Mucosa of descending colon (tissue), 3 donors: ENCODE measurements at regions of chr1 and their contacts with region 1.

Region 1: DNA sequence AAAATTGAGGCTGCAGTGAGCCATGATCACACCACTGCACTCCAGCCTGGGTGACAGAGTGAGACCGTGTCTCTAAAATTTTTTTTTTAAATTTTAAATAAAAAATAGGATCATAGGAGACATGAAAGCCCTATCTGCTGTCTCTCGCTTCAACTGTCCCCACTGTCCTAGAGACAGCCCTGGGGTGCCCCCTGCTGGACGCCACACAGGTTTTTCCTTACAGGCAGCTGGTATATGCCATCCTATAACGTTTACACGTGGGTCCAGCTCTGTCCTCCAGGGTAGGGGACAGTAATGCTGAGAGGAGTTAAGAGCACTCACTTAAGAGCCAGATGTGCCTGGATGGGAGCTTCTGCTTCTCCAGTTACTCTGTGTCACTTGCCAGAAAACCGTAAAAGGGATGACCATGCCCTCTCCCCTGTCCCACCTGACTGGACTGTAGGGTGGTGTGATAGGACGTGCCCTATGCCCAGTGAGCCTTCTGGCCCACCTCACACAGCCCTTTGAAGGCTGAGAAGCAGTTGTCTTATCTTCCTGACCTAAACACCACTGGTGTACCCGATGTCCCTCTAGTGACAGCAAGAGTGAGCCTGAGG is 8.5 kb downstream of the FBXO2 start:
- DNase-seq: peak; percentile 76 to 85 (median 85)
- ATAC-seq: peak; percentile 54
- H3K4me3 ChIP-seq: no peak overlapping the region
- H3K4me1 ChIP-seq: peaks cover 14% of the 10 kb centered on the region
- CTCF ChIP-seq: peak; percentile 65

Region 2: GRCh38 chr1:11037740-11038182 is 608.0 kb before region 1 on chr1:
- intact Hi-C with region 1: loop called (anchors 5 to 10 kb)
- DNase-seq: peak; percentile 84 to 91 (median 87)
- ATAC-seq: peak; percentile 97
- H3K4me3 ChIP-seq: no peak overlapping the region
- H3K4me1 ChIP-seq: peaks cover 4% of the 10 kb centered on the region
- CTCF ChIP-seq: peak; percentile 86

Region 3: DNA sequence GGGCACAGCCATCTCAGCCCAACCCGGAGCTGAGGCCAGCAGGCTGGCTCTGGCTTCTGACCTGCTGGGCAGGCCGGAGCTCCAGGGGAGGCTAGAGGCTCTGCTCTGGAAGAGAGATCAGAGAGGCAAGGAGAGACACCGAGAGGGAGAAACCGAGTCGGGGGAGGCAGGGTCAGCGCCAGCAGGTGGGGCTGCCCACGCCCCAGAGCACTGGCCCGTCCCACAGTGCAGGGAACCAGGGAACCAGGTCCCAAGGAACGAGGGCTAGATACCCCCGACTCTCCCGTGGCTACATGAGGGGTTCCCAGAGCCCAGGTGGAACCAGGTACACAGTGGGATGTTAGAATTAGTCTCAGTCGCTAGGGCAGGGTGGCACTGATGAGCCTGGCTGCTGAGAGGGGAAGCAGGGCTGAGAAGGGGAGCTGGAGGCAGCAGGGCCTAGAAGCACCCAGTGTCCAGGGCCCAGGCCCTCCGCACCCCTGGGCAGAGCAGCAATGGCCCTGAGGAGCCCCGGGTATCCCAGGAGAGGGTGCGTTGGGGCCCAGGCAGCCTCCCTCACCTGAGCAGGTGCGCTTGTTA is 600.8 kb before region 1 on chr1:
- intact Hi-C with region 1: loop called in 1 of 2 experiments (anchors 5 kb)
- DNase-seq: no peak
- ATAC-seq: no peak
- H3K4me3 ChIP-seq: no peak overlapping the region
- H3K4me1 ChIP-seq: no peaks in the 10 kb centered on the region
- CTCF ChIP-seq: no peak

Region 4: DNA sequence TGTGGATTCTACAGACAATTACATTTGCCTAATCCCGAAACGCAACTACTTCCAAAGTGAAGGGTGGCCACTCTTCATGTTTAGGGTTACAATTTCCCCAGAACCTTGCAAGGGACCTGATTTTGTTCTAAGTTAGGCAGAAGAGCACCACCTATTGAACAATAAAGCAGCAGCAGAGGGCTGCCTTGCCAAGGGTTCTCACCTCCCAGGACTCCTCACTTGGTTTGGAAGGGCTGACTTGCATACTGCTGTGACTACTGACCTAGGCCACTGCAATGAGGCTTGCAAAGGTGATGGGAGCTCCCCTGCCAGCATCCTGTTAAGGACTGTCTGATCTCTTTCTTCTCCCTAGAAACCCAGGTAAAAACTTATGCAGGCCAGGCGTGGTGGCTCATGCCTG is 397.6 kb before region 1 on chr1:
- intact Hi-C with region 1: loop called in 1 of 2 experiments (anchors 10 kb)
- DNase-seq: no peak
- ATAC-seq: no peak
- H3K4me3 ChIP-seq: no peak overlapping the region
- H3K4me1 ChIP-seq: no peaks in the 10 kb centered on the region
- CTCF ChIP-seq: no peak

Region 5: GRCh38 chr1:11719313-11720032 is 73.7 kb after region 1 on chr1:
- intact Hi-C with region 1: loop called (anchors 10 kb)
- DNase-seq: peak; percentile 86 to 93 (median 87)
- ATAC-seq: peak; percentile 95
- H3K4me3 ChIP-seq: no peak overlapping the region
- H3K4me1 ChIP-seq: no peaks in the 10 kb centered on the region
- CTCF ChIP-seq: peak; percentile 97